ENCODE measurements at regions of chr12 and their contacts with region 1.

Region 1: DNA sequence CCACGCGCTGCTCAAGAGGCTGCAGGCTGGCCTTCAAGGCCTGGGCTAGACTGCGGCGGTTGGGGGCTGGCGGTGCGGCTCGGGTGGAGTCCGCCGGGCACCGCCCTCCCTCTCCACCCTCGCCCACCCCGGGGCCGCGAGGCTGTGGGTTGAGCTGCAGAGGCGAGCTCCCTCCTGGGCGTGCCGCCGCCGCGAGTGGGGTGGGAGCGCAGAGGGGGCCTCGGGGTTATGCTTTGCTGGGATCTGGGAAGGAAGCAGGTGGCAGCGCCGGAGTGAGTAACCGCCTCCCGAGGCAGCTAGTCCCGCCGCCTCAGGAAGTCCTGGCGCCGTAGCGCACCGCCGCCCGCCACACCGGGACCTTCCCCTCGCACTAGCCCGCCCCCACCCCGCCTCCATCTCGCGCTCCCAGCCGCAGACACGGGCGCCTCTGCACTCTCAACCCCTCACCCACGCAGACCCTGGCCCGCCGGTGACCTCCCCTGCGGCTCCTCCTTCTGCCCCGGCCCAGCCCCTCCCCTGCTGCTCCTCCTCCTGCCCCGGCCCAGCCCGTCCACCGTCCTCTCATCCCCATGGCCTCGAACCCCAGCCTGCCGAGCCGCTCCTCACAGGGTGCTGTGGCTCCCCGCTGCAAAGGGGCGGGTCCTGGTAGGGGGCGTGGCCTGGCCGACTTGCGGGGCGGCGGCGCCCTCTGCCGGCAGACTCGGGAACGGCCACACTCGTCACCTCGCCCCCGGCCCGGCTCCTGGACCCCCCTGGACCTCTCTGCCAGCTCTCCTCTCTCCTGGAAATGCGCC is 16.6 kb downstream of the TAMALIN start:
- DNase-seq: peak in 3 of 4 donors; percentile 84 to 99 (median 91)
- ATAC-seq: peak; percentile 80
- H3K4me3 ChIP-seq: peak overlapping the region; percentile 37 to 47
- H3K27ac ChIP-seq: peak overlapping the region; percentile 31 to 85
- H3K4me1 ChIP-seq: peaks cover 3 to 48% of the 10 kb centered on the region in 2 donors
- H3K27me3 ChIP-seq: peaks cover 0 to 14% of the 10 kb centered on the region in 2 donors
- CTCF ChIP-seq: peak; percentile 92 to 94

Region 2: GRCh38 chr12:51823875-51824565 is 199.4 kb before region 1 on chr12:
- intact Hi-C with region 1: no loop called
- DNase-seq: peak in 1 of 4 donors; percentile 73
- ATAC-seq: peak; percentile 41
- H3K4me3 ChIP-seq: no peak overlapping the region
- H3K27ac ChIP-seq: no peak overlapping the region
- H3K4me1 ChIP-seq: peaks cover 0 to 31% of the 10 kb centered on the region in 2 donors
- H3K27me3 ChIP-seq: peaks cover 3 to 50% of the 10 kb centered on the region in 2 donors
- CTCF ChIP-seq: peak; percentile 21 to 34

Region 3: DNA sequence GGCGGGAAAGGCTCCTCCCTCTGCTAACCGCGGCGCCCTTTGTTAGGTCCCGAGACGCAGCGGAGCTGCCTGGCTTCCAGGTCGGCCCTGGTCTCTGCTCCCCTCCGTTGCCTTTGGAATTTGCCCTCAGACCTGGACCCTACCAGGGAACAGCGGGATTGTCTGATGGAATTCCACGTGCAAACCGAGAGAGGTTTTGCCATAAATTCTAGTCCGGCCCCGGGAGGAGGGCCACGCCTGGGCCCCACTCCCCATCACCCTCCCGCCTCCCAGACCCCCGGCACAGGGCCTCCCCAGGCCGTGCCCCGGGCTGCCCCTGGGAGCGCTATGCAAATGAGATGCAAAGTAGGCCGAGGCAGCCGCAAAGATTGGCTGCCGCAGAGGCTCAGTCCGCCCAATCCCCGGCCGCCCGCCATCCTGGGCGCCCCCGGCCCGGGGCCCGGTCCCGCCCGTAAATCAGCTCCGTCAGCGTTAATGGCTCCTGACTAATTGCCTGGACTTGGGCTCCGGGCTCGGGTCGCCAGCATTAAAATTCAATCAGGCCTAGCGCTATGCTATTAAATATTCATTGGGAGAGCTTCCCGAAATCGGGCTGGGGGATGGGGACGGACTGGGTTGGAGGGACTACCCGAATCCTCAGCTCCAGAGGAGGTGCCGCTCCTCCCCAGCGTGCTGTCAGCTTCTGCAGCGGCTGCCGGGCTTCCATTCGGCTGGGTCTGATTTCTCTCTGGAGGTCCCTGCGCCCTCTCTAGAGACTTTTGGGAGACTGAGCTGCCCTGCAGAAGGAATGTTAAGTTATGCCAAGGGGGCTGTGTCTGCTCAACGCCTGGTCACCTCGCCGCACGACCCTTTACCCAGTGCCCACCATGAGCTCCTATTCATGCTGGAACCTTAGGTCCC is 159.2 kb before region 1 on chr12:
- intact Hi-C with region 1: no loop called
- DNase-seq: peak in 3 of 4 donors; percentile 69 to 73 (median 71)
- ATAC-seq: peak; percentile 59
- H3K4me3 ChIP-seq: peak overlapping the region; percentile 12 to 26
- H3K27ac ChIP-seq: no peak overlapping the region
- H3K4me1 ChIP-seq: peaks cover 19 to 26% of the 10 kb centered on the region in 2 donors
- H3K27me3 ChIP-seq: peaks cover 4 to 77% of the 10 kb centered on the region in 2 donors
- CTCF ChIP-seq: no peak

Region 4: DNA sequence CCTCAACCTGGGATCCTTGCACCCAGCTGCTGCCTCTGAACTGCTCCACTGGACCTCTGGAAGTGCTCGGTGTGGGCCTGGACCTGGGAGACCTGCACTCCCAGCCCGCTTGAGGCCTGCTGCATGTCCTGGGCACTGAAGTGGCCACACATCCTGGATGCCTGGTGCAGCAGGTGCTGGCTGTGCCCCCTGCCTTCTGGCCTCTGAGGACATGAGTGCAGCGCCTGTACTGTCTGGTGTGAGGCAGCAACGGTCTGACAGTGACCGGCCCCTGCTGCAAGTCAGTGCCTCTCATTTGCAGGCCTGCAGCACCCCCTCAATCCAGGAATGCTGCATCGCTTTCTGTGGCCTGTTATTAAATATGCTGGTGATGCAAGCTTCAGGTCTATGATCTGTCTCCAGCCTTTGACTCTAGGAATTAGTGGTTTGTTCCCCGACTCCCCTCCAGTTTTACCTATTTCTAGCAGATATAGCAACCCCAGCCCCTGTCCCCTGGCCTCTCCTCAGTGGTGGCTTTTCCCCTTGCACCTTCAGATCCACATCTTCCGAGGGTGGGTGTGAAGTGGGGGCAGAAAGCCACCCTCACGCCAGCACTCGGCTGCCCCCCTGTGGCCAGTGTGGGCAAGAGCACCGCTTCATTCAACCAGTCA is 59.7 kb after region 1 on chr12:
- intact Hi-C with region 1: loop called in 1 of 2 experiments (anchors 2 kb)
- DNase-seq: peak in 1 of 4 donors; percentile 65
- ATAC-seq: peak; percentile 77
- H3K4me3 ChIP-seq: no peak overlapping the region
- H3K27ac ChIP-seq: peak overlapping the region; percentile 43 to 70
- H3K4me1 ChIP-seq: peaks cover 29 to 31% of the 10 kb centered on the region in 2 donors
- H3K27me3 ChIP-seq: peaks cover 0 to 14% of the 10 kb centered on the region in 2 donors
- CTCF ChIP-seq: peak; percentile 92 to 94

Region 5: DNA sequence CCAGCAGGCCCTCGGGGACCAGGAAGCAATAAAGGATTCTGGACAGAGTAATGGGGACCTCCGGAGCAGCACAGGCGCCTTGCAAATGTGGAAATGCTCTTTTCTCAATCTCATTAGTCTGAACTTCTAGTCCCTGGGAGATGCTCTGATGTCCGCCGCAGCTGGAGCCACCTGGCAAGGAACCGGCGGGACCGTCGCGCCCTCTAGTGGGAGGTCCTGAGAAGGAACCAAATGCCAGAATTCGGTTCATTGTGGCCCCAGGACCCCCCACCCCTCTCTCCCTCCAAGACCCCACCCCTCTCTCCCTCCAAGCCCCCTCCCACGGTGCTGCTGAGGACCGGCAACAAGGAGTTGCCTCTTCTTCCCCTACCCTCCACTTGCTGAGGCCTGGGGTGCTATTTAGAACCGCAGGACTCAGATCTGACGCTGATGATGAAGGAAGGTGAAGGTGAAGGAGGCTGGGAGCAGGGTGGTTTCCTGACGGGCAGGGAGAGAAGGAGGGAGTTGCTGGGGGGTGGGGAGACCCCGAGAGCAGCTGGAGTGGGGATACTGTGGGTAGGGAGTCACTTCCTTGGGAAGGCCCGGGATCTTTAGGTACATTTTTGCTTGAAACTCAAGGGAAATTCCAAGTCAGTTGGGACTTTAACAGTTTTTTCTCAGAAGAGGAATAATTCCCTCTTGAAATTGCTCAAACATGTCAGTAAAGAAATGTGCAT is 98.6 kb after region 1 on chr12:
- intact Hi-C with region 1: loop called in 1 of 2 experiments (anchors 10 kb)
- DNase-seq: peak in 3 of 4 donors; percentile 73 to 90 (median 90)
- ATAC-seq: peak; percentile 65
- H3K4me3 ChIP-seq: no peak overlapping the region
- H3K27ac ChIP-seq: no peak overlapping the region
- H3K4me1 ChIP-seq: peaks cover 0 to 28% of the 10 kb centered on the region in 2 donors
- H3K27me3 ChIP-seq: peaks cover 0 to 41% of the 10 kb centered on the region in 2 donors
- CTCF ChIP-seq: peak; percentile 62 to 64

Measured in left lung (tissue), 14 donors.